Activated B cell treated with CpG ODN at 0.5 μM for 24 hours (primary cell): ENCODE measurements at regions of chr2 and their contacts with region 1.

Region 1: GRCh38 chr2:230735884-230736283 is 23.2 kb downstream of the CAB39 start:
- DNase-seq: no peak
- ATAC-seq: no peak
- H3K4me3 Mint-ChIP-seq: no peak overlapping the region
- H3K27ac Mint-ChIP-seq: peak overlapping the region; percentile 24
- H3K4me1 Mint-ChIP-seq: peaks cover 66% of the 10 kb centered on the region
- H3K27me3 Mint-ChIP-seq: no peaks in the 10 kb centered on the region
- CTCF ChIP-seq: no peak

Region 2: DNA sequence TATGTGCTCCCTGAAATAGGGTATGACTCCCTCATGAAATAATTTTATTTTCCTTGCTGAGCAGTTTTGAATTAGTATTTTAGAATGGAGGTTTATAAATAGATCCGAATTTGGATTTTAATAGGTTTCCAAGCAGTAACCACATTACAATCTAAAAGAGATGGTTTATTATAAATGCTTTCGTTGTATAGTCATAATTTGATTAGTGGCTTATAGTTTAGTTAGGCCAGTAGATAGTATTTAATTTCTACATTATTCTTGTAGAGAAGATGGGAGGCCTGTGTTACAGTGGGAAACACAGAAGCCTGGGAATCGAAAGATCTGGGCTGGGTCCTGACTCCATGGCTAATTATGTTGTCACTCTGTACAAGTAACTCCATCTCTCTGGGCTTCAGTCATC is 16.5 kb before region 1 on chr2:
- CTCF ChIA-PET with region 1: no interaction called
- POLR2A ChIA-PET with region 1: no interaction called
- intact Hi-C with region 1: no loop called
- DNase-seq: no peak
- ATAC-seq: no peak
- H3K4me3 Mint-ChIP-seq: no peak overlapping the region
- H3K27ac Mint-ChIP-seq: no peak overlapping the region
- H3K4me1 Mint-ChIP-seq: peaks cover 80% of the 10 kb centered on the region
- H3K27me3 Mint-ChIP-seq: no peaks in the 10 kb centered on the region
- CTCF ChIP-seq: no peak

Region 3: GRCh38 chr2:230751062-230751461 is 15.2 kb after region 1 on chr2:
- CTCF ChIA-PET with region 1: no interaction called
- POLR2A ChIA-PET with region 1: no interaction called
- intact Hi-C with region 1: loop called (anchors 2 kb)
- DNase-seq: no peak
- ATAC-seq: no peak
- H3K4me3 Mint-ChIP-seq: no peak overlapping the region
- H3K27ac Mint-ChIP-seq: no peak overlapping the region
- H3K4me1 Mint-ChIP-seq: peaks cover 46% of the 10 kb centered on the region
- H3K27me3 Mint-ChIP-seq: no peaks in the 10 kb centered on the region
- CTCF ChIP-seq: no peak

Region 4: DNA sequence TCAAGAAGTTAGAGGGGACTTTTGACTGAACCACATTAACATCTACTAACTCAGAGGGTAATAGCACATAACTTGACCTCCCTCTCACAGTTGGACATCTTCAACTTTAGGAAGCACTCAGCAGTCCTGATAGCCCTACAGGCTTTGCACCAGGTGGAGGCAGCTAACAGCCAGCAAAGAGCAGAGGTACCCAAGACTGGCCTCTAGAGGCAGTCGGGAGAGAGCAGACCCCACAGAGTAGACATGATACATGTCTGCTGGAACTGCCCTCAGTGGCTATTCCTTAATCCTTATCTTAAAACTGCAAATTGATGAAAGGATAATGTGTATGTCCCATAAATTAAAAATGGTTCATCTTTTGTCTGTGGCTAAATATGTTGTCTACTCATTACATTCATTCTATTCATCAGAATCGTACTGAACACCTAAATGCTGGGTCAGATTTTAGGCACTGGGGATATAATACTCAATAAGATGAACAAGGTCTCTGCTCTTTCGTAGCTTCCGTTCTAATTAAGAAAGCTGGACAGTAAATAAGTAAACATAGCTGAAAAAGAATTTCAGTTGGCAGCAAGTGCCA is 26.5 kb after region 1 on chr2:
- CTCF ChIA-PET with region 1: no interaction called
- POLR2A ChIA-PET with region 1: interaction called, 3 read pairs
- intact Hi-C with region 1: loop called (anchors 5 kb)
- DNase-seq: no peak
- ATAC-seq: peak; percentile 85
- H3K4me3 Mint-ChIP-seq: no peak overlapping the region
- H3K27ac Mint-ChIP-seq: no peak overlapping the region
- H3K4me1 Mint-ChIP-seq: peaks cover 40% of the 10 kb centered on the region
- H3K27me3 Mint-ChIP-seq: no peaks in the 10 kb centered on the region
- CTCF ChIP-seq: no peak